ENCODE measurements at regions of chr15 and their contacts with region 1.

Region 1: DNA sequence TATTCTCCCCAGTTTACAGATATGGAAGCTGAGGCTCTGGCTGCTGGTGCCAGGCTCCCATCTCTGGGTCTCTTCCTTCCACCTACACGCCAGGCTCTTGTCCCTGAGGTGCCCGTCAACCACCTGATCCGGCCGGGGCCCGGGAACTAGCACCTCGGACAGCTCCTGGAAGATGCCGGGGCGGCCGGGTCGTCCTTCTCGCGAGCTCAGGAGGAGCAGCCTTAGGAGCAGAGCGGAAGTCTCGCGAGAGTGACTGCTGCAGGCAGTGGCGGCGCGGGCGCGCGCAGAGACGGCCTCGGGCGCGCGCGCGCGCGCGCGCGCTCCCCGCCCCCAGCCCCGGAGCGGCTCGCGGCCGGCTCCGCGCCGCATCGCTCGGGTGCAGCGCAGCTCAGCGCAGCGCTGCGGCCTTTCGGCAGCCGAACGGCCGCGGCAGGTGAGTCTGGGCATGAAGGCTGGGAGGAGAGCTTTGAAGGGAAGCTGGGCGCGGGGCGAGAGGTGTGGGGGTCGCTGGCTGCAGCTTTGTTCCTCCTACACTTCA is at the start of gene SCAMP5:
- DNase-seq: peak; percentile 95
- H3K4me3 Mint-ChIP-seq: peak within 1 kb of the TSS; percentile 65
- H3K27ac Mint-ChIP-seq: no peak within 1 kb of the TSS
- H3K4me1 Mint-ChIP-seq: peaks cover 15% of the 10 kb centered on the region
- H3K27me3 Mint-ChIP-seq: peaks cover 33% of the 10 kb centered on the region
- total RNA-seq, gene SCAMP5: 0.15 to 0.38 TPM

Region 2: DNA sequence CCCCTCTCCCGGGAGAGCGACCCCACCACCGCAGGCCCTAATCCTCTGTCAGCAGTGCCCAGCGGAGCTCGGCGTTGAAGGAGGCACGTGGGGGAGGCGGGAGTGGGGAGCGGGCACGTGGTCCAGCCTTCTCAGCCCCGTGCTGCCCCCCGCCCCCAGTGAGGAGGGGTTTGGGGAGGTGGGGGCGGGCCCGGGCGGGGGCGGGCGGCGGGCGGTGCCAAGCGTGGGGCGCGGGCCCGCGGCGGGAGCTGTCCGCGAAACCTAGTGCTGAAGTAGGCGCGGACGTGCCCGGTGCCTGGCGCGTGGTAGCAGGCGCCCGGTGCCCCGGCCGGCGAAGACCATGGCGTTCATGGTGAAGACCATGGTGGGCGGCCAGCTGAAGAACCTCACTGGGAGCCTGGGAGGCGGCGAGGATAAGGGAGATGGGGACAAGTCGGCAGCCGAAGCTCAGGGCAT is 168.9 kb before region 1 on chr15 and contains the start of gene CPLX3:
- CTCF ChIA-PET with region 1: no interaction called
- intact Hi-C with region 1: loop called (anchors 5 kb)
- DNase-seq: peak; percentile 53
- H3K4me3 Mint-ChIP-seq: no peak within 1 kb of the TSS
- H3K27ac Mint-ChIP-seq: no peak within 1 kb of the TSS
- H3K4me1 Mint-ChIP-seq: peaks cover 6% of the 10 kb centered on the region
- H3K27me3 Mint-ChIP-seq: peaks cover 21% of the 10 kb centered on the region
- total RNA-seq, gene CPLX3: not detected

Region 3: DNA sequence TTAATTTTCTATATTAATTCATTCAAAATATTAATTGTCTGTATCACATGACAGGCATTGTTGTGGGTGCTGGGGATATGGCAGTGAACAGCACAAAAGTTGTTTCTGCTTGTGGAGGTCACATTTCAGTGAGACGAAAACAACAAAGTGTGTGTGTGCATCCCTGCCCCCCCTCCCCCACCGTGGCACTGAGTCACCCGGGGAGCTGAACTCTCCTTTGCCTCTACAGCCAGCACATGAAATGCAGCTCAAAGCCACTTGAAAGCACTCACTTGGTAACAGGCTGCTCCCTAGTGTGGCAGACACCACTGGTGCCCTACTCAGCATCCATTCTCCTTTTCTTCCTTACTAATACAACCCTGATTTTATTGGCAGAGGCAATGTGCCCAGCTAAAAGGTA is 16.8 kb before region 1 on chr15:
- CTCF ChIA-PET with region 1: no interaction called
- intact Hi-C with region 1: no loop called
- DNase-seq: peak; percentile 46
- H3K4me3 Mint-ChIP-seq: no peak overlapping the region
- H3K27ac Mint-ChIP-seq: no peak overlapping the region
- H3K4me1 Mint-ChIP-seq: peaks cover 7% of the 10 kb centered on the region
- H3K27me3 Mint-ChIP-seq: peaks cover 7% of the 10 kb centered on the region